ENCODE measurements at regions of chr2 and their contacts with region 1.

Region 1: GRCh38 chr2:69717861-69718273 is 24.1 kb upstream of the ANXA4 start:
- DNase-seq: no peak
- H3K4me3 ChIP-seq: no peak overlapping the region
- H3K27ac ChIP-seq: no peak overlapping the region
- H3K4me1 ChIP-seq: no peaks in the 10 kb centered on the region
- H3K27me3 ChIP-seq: no peaks in the 10 kb centered on the region
- CTCF ChIP-seq: no peak
- POLR2A ChIP-seq: no peak

Region 2: GRCh38 chr2:68751397-68752339 is 966.2 kb before region 1 on chr2:
- intact Hi-C with region 1: no loop called
- DNase-seq: peak; percentile 85 to 92
- H3K4me3 ChIP-seq: peak overlapping the region in 1 of 3 donors; percentile 45
- H3K27ac ChIP-seq: no peak overlapping the region
- H3K4me1 ChIP-seq: no peaks in the 10 kb centered on the region
- H3K27me3 ChIP-seq: no peaks in the 10 kb centered on the region
- CTCF ChIP-seq: peak; percentile 84 to 93 (median 86)
- POLR2A ChIP-seq: no peak

Region 3: GRCh38 chr2:69559442-69560146 is 158.3 kb before region 1 on chr2:
- intact Hi-C with region 1: loop called (anchors 10 kb)
- DNase-seq: no peak
- H3K4me3 ChIP-seq: no peak overlapping the region
- H3K27ac ChIP-seq: no peak overlapping the region
- H3K4me1 ChIP-seq: no peaks in the 10 kb centered on the region
- H3K27me3 ChIP-seq: no peaks in the 10 kb centered on the region
- CTCF ChIP-seq: peak; percentile 40 to 67 (median 61)
- POLR2A ChIP-seq: no peak

Measured in breast epithelium (tissue), 4 donors.